Activated naive CD4-positive, alpha-beta T cell treated with anti-CD3 and anti-CD28 coated beads for 36 hours (primary cell): ENCODE measurements at regions of chr13 and their contacts with region 1.

Region 1: GRCh38 chr13:51286135-51287002 is 53.1 kb upstream of the SERPINE3 start:
- DNase-seq: peak; percentile 87
- H3K4me3 Mint-ChIP-seq: no peak overlapping the region
- H3K27ac Mint-ChIP-seq: no peak overlapping the region
- H3K4me1 Mint-ChIP-seq: no peaks in the 10 kb centered on the region
- H3K27me3 Mint-ChIP-seq: no peaks in the 10 kb centered on the region

Region 2: GRCh38 chr13:51083706-51084105 is 202.7 kb before region 1 on chr13:
- CTCF ChIA-PET with region 1: no interaction called
- intact Hi-C with region 1: no loop called
- DNase-seq: no peak
- H3K4me3 Mint-ChIP-seq: no peak overlapping the region
- H3K27ac Mint-ChIP-seq: no peak overlapping the region
- H3K4me1 Mint-ChIP-seq: no peaks in the 10 kb centered on the region
- H3K27me3 Mint-ChIP-seq: no peaks in the 10 kb centered on the region

Region 3: GRCh38 chr13:51125498-51126226 is 160.7 kb before region 1 on chr13:
- CTCF ChIA-PET with region 1: interaction called, 148 read pairs
- intact Hi-C with region 1: loop called (anchors 1 kb)
- DNase-seq: peak; percentile 67
- H3K4me3 Mint-ChIP-seq: no peak overlapping the region
- H3K27ac Mint-ChIP-seq: no peak overlapping the region
- H3K4me1 Mint-ChIP-seq: peaks cover 5% of the 10 kb centered on the region
- H3K27me3 Mint-ChIP-seq: peaks cover 8% of the 10 kb centered on the region

Region 4: DNA sequence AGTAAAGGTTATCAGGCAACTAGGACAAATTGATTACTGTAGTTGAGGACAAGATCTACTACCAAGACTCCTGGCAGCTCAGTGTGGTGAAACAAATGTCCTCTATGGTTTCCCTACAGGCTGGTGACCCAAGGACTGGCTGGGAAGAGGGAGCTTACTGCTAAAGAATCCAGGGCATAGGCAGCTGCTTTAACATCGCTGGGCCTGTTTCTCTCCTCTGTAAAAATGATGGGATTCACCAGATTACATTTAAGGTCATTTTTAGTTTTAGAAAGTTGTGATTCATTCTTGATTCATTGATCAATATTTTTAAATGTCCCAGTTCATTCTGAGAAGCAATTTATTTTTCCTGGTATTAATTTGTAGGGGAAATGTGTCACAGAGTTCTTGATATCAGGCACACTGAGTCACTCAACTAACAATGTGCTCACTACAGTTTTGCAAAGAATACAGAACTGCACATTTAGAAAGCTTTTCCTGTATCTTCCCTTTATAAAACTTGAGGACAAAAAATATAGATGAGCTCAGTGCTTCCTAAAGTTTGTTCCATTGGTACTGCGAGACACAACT is 83.8 kb before region 1 on chr13:
- CTCF ChIA-PET with region 1: interaction called, 10 read pairs
- intact Hi-C with region 1: no loop called
- DNase-seq: no peak
- H3K4me3 Mint-ChIP-seq: no peak overlapping the region
- H3K27ac Mint-ChIP-seq: no peak overlapping the region
- H3K4me1 Mint-ChIP-seq: no peaks in the 10 kb centered on the region
- H3K27me3 Mint-ChIP-seq: peaks cover 8% of the 10 kb centered on the region

Region 5: DNA sequence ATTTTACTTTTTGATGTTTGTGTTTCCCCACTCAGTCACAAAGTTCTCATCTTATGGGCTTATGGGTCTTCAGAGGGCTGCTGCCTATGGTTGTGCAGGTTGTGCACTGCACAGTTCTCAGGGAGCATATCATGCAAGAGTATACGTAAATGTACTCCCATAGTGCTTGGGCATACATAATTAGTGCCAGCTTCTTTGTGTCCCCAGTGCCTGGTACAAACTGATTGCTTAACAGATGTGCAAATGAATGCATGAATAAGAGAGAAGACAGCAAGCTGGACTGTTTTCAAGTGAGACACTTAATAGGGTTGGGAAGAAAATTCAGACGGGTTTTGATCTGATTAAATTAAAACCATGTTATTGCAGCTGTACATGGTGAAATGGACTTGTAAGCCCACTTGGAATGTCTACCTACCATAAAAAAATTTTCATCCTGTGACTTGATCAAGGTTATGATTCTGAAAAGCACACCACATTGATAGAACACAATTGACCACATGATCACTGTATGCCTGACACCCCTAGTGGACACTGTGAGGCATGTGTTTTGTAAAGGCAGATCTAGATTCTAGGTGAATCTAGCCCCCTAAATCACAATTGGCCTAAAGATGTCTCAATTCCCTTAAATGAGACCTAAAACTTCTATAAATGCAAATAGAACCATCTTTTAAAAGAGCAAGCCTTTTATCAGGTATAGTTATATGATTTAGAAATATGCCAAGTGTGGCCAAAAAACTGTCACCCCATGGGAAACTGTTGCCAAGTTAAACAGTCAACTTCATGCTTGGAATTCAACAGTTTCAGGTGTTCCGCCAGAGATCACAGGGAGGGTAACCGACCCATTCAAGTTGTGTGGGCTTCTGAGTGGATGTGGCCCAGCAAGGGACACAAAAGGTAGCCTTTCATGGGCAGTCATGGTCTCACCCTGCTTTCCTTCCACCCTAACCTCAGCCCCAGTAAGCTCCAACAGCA is 36.3 kb before region 1 on chr13:
- CTCF ChIA-PET with region 1: interaction called, 16 read pairs
- intact Hi-C with region 1: no loop called
- DNase-seq: no peak
- H3K4me3 Mint-ChIP-seq: no peak overlapping the region
- H3K27ac Mint-ChIP-seq: no peak overlapping the region
- H3K4me1 Mint-ChIP-seq: no peaks in the 10 kb centered on the region
- H3K27me3 Mint-ChIP-seq: no peaks in the 10 kb centered on the region

Region 6: DNA sequence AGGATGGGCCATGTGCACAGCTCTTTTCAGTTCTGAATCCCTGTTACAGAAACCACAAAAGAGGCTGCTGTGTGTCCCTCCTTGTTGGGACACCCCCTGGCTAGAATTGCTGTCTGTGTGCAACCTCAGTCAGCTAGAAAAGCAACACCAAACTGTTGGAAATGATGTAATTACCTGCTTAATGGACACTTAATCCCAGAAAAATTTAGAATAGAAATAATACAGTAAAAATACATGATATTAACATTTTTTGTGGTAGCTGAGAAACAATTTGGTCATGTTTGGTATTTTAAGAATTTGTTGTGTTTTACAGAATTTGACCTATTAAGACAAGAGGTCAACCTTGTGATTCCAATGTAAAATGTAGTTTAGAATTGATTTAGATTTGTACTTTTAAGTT is 17.3 kb before region 1 on chr13:
- CTCF ChIA-PET with region 1: interaction called, 17 read pairs
- intact Hi-C with region 1: no loop called
- DNase-seq: no peak
- H3K4me3 Mint-ChIP-seq: no peak overlapping the region
- H3K27ac Mint-ChIP-seq: no peak overlapping the region
- H3K4me1 Mint-ChIP-seq: no peaks in the 10 kb centered on the region
- H3K27me3 Mint-ChIP-seq: no peaks in the 10 kb centered on the region